Activated T-helper 2 cell treated with anti-CD3 and anti-CD28 coated beads, Interferon-gamma antibody, Interleukin-2, Interleukin-4, amounts not matched to agents 10 μg/mL and 5 μg/mL and 100 μg/mL, durations not matched to agents 14 hours and 24 hours and 36 hours (primary cell): ENCODE measurements at regions of chr4 and their contacts with region 1.

Region 1: DNA sequence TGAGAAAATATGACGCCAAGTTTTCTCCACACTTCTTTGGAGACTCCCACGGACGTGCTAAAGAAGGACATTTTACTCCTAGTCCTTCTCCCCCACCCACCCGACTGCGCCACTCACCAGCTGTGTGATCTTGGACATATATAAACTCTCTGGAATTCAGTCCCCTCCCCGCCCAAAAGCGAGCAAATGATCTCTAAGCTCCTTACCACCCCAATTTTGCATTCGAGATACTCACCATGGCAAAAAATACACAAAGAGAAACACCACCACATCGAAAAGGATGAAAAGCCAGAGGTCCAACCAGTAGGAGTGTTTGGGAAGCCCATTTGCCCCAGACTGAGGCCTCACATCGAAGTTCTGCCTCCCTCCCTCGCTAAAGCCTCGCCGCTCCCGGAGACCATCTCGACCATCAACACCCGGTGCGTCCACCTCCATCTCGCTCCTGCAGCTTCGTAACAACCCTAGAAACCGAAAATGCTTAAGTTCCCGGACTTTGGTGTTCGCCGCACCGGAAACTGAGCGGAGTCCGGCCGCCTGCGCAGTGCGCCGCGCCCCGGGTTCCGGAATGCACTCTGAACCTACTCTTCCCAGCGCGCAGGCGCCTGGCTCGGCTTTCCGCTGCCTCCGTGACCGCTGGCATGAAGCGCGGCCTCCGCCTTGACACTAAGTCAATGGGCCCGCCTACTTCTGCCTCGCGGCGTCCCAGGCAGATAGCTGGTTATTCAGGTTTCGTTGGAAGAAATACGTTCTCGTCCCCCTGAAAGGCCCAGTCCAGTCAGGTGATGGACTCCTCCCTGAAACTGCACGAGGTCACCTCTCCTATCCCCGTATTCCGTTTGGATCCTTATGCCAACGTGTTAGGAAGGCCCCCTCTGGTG is 21.6 kb downstream of the FABP2 start:
- DNase-seq: peak; percentile 93
- H3K4me3 Mint-ChIP-seq: peak overlapping the region; percentile 92
- H3K27ac Mint-ChIP-seq: peak overlapping the region; percentile 97
- H3K4me1 Mint-ChIP-seq: peaks cover 34% of the 10 kb centered on the region
- H3K27me3 Mint-ChIP-seq: peaks cover 3% of the 10 kb centered on the region

Region 2: DNA sequence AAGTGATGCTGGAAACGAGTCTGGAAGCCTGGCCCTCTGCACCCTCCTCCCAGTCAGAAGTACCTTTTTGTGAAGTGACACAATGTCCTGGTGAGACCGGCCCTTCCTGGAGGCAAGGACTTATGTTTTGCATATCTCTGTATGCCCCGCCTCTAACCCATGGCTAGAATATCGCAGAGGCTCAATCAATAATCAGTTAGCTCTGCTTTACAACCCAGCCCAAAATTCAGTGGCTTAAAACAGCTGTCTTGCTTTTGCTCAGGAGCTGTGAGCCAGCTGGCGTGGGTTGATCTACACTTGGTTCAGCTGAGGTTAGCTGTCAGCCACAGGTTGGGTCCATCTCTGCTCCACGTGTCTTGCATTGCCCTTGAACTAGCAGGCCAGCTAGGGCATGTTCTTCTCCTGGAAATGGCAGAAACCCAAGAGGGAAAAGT is 714.0 kb before region 1 on chr4:
- intact Hi-C with region 1: loop called (anchors 2 kb)
- DNase-seq: no peak
- H3K4me3 Mint-ChIP-seq: no peak overlapping the region
- H3K27ac Mint-ChIP-seq: no peak overlapping the region
- H3K4me1 Mint-ChIP-seq: peaks cover 7% of the 10 kb centered on the region
- H3K27me3 Mint-ChIP-seq: peaks cover 10% of the 10 kb centered on the region

Region 3: GRCh38 chr4:118835571-118836300 is 464.6 kb before region 1 on chr4 and contains the start of gene SEC24D:
- intact Hi-C with region 1: loop called (anchors 10 kb)
- DNase-seq: peak; percentile 83
- H3K4me3 Mint-ChIP-seq: peak within 1 kb of the TSS; percentile 100
- H3K27ac Mint-ChIP-seq: peak within 1 kb of the TSS; percentile 99
- H3K4me1 Mint-ChIP-seq: peaks cover 27% of the 10 kb centered on the region
- H3K27me3 Mint-ChIP-seq: peaks cover 8% of the 10 kb centered on the region
- total RNA-seq, gene SEC24D: 54.8 and 60.0 TPM in 2 replicates

Region 4: GRCh38 chr4:119151161-119151560 is 149.2 kb before region 1 on chr4:
- intact Hi-C with region 1: no loop called
- DNase-seq: no peak
- H3K4me3 Mint-ChIP-seq: no peak overlapping the region
- H3K27ac Mint-ChIP-seq: no peak overlapping the region
- H3K4me1 Mint-ChIP-seq: no peaks in the 10 kb centered on the region
- H3K27me3 Mint-ChIP-seq: peaks cover 9% of the 10 kb centered on the region

Region 5: GRCh38 chr4:119212234-119212963 is 87.9 kb before region 1 on chr4 and contains the start of gene USP53:
- intact Hi-C with region 1: loop called (anchors 1 kb)
- DNase-seq: peak; percentile 93
- H3K4me3 Mint-ChIP-seq: peak within 1 kb of the TSS; percentile 91
- H3K27ac Mint-ChIP-seq: peak within 1 kb of the TSS; percentile 88
- H3K4me1 Mint-ChIP-seq: peaks cover 33% of the 10 kb centered on the region
- H3K27me3 Mint-ChIP-seq: peaks cover 8% of the 10 kb centered on the region
- total RNA-seq, gene USP53: 6.6 and 7.3 TPM in 2 replicates

Region 6: DNA sequence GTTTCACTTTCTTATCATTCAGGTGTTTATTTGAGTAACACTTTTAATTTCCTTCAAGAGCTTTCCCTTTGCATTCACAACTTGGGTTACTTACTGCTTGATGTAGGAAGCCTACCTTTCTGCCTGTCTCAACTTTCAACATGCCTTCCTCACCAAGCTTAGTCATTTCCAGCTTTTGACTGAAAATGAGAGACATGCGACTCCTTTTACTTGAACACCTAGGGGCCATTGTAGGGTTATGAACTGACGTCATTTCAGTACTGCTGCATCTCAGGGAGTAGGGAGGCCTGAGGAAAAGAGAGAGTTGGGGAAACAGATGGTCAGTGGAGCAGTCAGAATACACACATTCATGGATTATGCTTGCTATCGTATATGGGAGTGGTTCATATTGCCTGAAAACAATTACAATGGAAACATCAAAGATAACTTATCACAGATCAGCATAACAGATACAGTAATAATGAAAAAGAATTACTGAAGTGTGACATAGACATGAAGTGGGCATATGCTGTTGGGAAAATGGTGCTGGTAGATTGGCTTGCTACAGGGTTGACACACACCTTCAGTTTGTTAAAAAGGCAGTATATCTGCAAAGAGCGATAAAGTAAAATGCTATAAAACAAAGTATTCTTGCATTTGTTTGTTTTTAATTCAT is 62.1 kb before region 1 on chr4:
- intact Hi-C with region 1: loop called (anchors 1 kb)
- DNase-seq: peak; percentile 24
- H3K4me3 Mint-ChIP-seq: no peak overlapping the region
- H3K27ac Mint-ChIP-seq: peak overlapping the region; percentile 87
- H3K4me1 Mint-ChIP-seq: peaks cover 36% of the 10 kb centered on the region
- H3K27me3 Mint-ChIP-seq: no peaks in the 10 kb centered on the region

Region 7: DNA sequence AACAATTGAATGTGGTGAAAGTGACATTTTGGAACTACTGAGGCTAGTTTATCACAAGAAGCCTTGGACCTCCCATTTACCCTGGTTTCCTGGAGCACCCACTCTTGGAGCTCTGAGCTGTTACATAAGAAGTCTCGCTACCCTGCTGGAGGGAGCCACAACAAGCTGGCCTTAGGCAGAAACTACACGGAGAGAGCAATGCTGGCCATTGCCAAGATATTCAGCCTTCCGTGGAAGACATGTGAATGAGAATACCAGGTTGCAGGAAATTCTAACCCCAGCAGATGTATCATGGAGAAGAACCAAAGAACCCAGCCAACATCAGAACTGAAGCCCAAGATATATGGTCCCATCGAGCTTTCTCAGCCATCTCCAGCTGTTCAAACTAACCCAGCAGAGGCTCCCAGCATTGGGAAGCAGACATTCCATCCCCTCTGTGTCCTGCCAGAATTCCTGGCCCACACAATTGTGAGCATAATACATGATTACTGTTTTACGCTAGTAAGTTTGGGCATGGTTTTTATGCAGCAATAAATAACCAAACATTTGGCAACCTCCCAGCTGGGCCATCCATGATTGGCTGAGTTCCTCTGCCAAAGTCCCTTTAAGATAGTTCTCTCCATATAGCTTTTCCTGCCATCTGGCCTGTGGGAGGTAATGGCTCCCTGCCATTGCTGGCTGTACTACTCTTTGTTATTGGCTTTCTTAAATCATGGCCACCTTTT is 346.2 kb after region 1 on chr4:
- intact Hi-C with region 1: no loop called
- DNase-seq: no peak
- H3K4me3 Mint-ChIP-seq: no peak overlapping the region
- H3K27ac Mint-ChIP-seq: no peak overlapping the region
- H3K4me1 Mint-ChIP-seq: no peaks in the 10 kb centered on the region
- H3K27me3 Mint-ChIP-seq: peaks cover 2% of the 10 kb centered on the region